GM12878 (cell line): ENCODE measurements at regions of chr4 and their contacts with region 1.

Region 1: GRCh38 chr4:77240469-77241066 is 83.6 kb downstream of the CCNG2 start:
- DNase-seq: no peak
- ATAC-seq: peak; percentile 99
- H3K4me3 ChIP-seq: no peak overlapping the region
- H3K27ac ChIP-seq: no peak overlapping the region
- H3K4me1 ChIP-seq: peaks cover 1% of the 10 kb centered on the region; the same call in 1 of the 2 replicates
- H3K27me3 ChIP-seq: no peaks in the 10 kb centered on the region; a peak in 2 of 4 replicates
- CTCF ChIP-seq: peak; percentile 78 to 87 (median 86)
- EP300 ChIP-seq: no peak
- POLR2A ChIP-seq: no peak
- RAD21 ChIP-seq: peak; percentile 83

Region 2: DNA sequence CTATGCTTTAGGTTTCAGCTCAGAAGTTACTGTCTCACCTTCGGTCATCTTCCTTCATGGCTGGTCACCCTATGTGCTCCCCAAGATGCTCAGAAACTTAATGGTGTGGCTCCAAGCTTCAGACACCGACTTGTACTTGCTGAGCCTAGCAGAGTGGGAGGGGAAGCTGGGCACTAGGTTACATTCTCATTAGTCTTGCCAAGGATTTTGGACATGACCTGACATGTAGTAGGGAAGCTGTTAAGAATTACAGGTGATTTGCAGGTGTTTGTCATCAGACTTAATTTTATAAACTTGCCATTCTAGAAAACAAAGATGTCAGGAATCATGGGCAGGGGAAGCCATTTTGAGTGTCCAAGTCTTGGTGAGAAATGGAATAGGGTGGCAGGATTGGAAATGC is 11.1 kb before region 1 on chr4:
- CTCF ChIA-PET with region 1: interaction called, 10 read pairs
- POLR2A ChIA-PET with region 1: no interaction called
- RAD21 ChIA-PET with region 1: interaction called, 3 read pairs
- SMC1A ChIA-PET with region 1: interaction called, 4 read pairs
- in situ Hi-C with region 1: no loop called
- intact Hi-C with region 1: no loop called
- DNase-seq: no peak
- ATAC-seq: no peak
- H3K4me3 ChIP-seq: no peak overlapping the region
- H3K27ac ChIP-seq: no peak overlapping the region
- H3K4me1 ChIP-seq: no peaks in the 10 kb centered on the region
- H3K27me3 ChIP-seq: peaks cover 0 to 2% of the 10 kb centered on the region in 2 experiments; a peak in 2 of 4 replicates
- CTCF ChIP-seq: no peak
- EP300 ChIP-seq: no peak
- POLR2A ChIP-seq: no peak
- RAD21 ChIP-seq: no peak

Region 3: GRCh38 chr4:77308843-77309242 is 68.3 kb after region 1 on chr4:
- CTCF ChIA-PET with region 1: interaction called, 7 read pairs
- POLR2A ChIA-PET with region 1: no interaction called
- RAD21 ChIA-PET with region 1: interaction called, 3 read pairs
- SMC1A ChIA-PET with region 1: interaction called, 4 read pairs
- in situ Hi-C with region 1: no loop called
- intact Hi-C with region 1: loop called (anchors 2 kb)
- DNase-seq: no peak
- ATAC-seq: peak; percentile 82
- H3K4me3 ChIP-seq: no peak overlapping the region
- H3K27ac ChIP-seq: no peak overlapping the region
- H3K4me1 ChIP-seq: no peaks in the 10 kb centered on the region
- H3K27me3 ChIP-seq: no peaks in the 10 kb centered on the region
- CTCF ChIP-seq: peak; percentile 29 to 52 (median 30); a peak in 4 of 6 replicates
- EP300 ChIP-seq: no peak
- POLR2A ChIP-seq: no peak
- RAD21 ChIP-seq: peak; percentile 46

Region 4: DNA sequence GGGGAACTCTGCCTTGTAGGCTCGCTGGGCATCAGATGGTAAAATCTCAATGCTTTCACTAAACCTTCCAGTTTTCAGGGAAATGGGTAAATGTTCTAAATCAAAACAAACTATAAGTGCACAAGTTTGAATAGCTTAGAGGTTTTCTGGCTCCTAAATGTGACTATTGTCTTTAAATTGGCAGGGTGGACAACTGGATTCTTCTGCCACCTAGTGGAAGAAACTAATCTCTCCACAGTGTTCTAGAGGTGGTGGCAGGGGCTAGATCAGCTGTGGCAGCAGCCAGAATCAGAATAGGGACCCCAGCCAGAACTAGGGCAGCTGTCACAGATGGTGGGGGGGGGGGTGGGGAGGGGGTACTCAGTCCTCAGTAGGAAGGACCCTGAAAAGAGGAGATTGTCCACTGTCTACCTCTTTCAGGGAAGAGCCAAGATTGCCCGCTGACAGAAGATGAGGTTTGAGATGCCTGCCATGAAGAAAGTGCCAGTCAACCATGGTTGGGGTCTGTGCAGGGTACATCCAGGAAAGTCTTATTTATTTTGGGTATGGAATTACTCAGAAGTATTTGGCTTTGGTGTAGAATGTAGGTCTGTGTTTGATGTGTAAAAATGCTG is 117.9 kb after region 1 on chr4:
- CTCF ChIA-PET with region 1: interaction called, 59 read pairs
- POLR2A ChIA-PET with region 1: no interaction called
- RAD21 ChIA-PET with region 1: interaction called, 7 read pairs
- SMC1A ChIA-PET with region 1: interaction called, 27 read pairs
- in situ Hi-C with region 1: loop called (anchors 5 kb)
- intact Hi-C with region 1: loop called (anchors 1 kb)
- DNase-seq: no peak
- ATAC-seq: peak; percentile 88
- H3K4me3 ChIP-seq: no peak overlapping the region
- H3K27ac ChIP-seq: no peak overlapping the region
- H3K4me1 ChIP-seq: no peaks in the 10 kb centered on the region; the same call in 1 of the 2 replicates
- H3K27me3 ChIP-seq: no peaks in the 10 kb centered on the region; a peak in 1 of 4 replicates
- CTCF ChIP-seq: peak; percentile 60 to 65 (median 60); a peak in 5 of 6 replicates
- EP300 ChIP-seq: no peak
- POLR2A ChIP-seq: no peak
- RAD21 ChIP-seq: peak; percentile 67

Region 5: DNA sequence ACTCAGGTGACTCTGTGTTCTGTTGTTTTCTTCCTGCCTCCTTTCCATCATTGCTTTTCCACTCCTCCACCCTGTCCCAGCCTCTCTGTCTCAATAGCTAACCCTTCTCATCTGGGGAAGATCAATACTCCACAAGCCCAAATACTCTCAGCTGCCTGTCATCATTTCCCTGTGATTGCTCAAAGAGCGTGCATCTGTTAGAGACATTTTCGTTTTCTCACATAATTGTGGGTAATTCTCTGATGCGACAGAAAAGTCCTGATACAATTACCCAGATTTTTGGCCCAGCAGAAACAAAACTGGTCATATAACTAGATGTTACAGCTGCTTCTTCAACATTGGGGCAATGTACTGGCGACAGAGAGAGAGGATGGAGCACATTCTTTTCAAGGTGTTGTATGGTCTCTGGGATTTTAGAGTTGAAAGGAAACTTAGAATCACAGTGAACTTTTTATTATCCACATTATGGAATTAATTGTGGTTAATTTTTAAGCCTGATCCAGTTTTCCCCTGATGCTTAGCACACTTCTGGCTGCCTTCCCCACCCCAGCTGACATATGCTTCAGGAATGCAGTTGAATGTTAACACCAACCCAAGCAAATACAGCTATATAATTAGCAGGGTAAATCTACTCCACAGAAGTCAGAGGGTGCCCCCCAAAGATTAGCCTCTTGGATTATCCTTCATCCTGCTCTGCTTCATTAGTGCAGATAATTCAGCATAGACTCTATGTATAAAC is 1139.6 kb after region 1 on chr4:
- CTCF ChIA-PET with region 1: no interaction called
- POLR2A ChIA-PET with region 1: no interaction called
- RAD21 ChIA-PET with region 1: no interaction called
- SMC1A ChIA-PET with region 1: no interaction called
- in situ Hi-C with region 1: no loop called
- intact Hi-C with region 1: no loop called
- DNase-seq: no peak
- ATAC-seq: no peak
- H3K4me3 ChIP-seq: no peak overlapping the region
- H3K27ac ChIP-seq: no peak overlapping the region
- H3K4me1 ChIP-seq: no peaks in the 10 kb centered on the region
- H3K27me3 ChIP-seq: no peaks in the 10 kb centered on the region
- CTCF ChIP-seq: no peak
- EP300 ChIP-seq: no peak
- POLR2A ChIP-seq: no peak
- RAD21 ChIP-seq: no peak